ENCODE measurements at regions of chr4 and their contacts with region 1.

Region 1: GRCh38 chr4:71229477-71230270 is 109.1 kb upstream of the SLC4A4 start:
- DNase-seq: peak; percentile 54
- H3K4me3 Mint-ChIP-seq: no peak overlapping the region
- H3K27ac Mint-ChIP-seq: no peak overlapping the region
- H3K4me1 Mint-ChIP-seq: no peaks in the 10 kb centered on the region
- H3K27me3 Mint-ChIP-seq: no peaks in the 10 kb centered on the region
- CTCF ChIP-seq: peak; percentile 70

Region 2: GRCh38 chr4:70601422-70602039 is 628.1 kb before region 1 on chr4:
- CTCF ChIA-PET with region 1: interaction called, 3 read pairs
- POLR2A ChIA-PET with region 1: no interaction called
- intact Hi-C with region 1: loop called (anchors 1 kb)
- DNase-seq: peak; percentile 76
- H3K4me3 Mint-ChIP-seq: no peak overlapping the region
- H3K27ac Mint-ChIP-seq: no peak overlapping the region
- H3K4me1 Mint-ChIP-seq: no peaks in the 10 kb centered on the region
- H3K27me3 Mint-ChIP-seq: no peaks in the 10 kb centered on the region
- CTCF ChIP-seq: peak; percentile 72

Region 3: GRCh38 chr4:71081192-71081591 is 148.5 kb before region 1 on chr4:
- CTCF ChIA-PET with region 1: no interaction called
- POLR2A ChIA-PET with region 1: no interaction called
- intact Hi-C with region 1: no loop called
- DNase-seq: no peak
- H3K4me3 Mint-ChIP-seq: no peak overlapping the region
- H3K27ac Mint-ChIP-seq: no peak overlapping the region
- H3K4me1 Mint-ChIP-seq: no peaks in the 10 kb centered on the region
- H3K27me3 Mint-ChIP-seq: no peaks in the 10 kb centered on the region
- CTCF ChIP-seq: no peak

Region 4: GRCh38 chr4:71095545-71095944 is 134.1 kb before region 1 on chr4:
- CTCF ChIA-PET with region 1: no interaction called
- POLR2A ChIA-PET with region 1: no interaction called
- intact Hi-C with region 1: no loop called
- DNase-seq: no peak
- H3K4me3 Mint-ChIP-seq: no peak overlapping the region
- H3K27ac Mint-ChIP-seq: peak overlapping the region; percentile 0
- H3K4me1 Mint-ChIP-seq: no peaks in the 10 kb centered on the region
- H3K27me3 Mint-ChIP-seq: no peaks in the 10 kb centered on the region
- CTCF ChIP-seq: no peak

Region 5: DNA sequence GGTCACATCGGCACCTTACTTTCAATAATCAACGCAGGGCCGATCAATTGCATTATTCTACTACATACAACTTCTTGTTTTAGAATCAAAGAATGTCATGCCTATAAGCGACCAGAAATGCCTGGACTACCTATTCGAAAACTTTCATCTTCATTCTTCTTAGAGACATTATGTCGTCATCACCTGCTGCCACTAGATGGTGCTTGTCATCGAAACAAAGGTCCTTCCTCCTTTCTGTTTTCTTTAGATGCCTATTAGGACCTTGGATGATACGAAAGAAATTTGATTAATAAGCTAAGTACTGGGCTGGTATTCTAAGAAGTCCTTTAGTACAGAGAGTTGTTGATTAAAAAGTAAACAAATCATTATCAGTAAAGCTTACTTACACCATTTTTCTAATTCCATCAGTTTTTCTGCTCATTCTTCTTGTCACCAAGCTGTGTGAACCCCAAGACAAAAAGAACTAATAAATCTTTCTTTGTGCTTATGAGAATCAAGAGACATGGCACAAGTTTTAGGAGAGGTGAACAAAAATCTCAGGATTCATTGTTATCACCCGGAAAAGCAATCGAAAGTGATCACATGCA is 45.4 kb before region 1 on chr4:
- CTCF ChIA-PET with region 1: interaction called, 35 read pairs
- POLR2A ChIA-PET with region 1: no interaction called
- intact Hi-C with region 1: no loop called
- DNase-seq: peak; percentile 68
- H3K4me3 Mint-ChIP-seq: no peak overlapping the region
- H3K27ac Mint-ChIP-seq: no peak overlapping the region
- H3K4me1 Mint-ChIP-seq: no peaks in the 10 kb centered on the region
- H3K27me3 Mint-ChIP-seq: peaks cover 25% of the 10 kb centered on the region
- CTCF ChIP-seq: peak; percentile 56

Region 6: DNA sequence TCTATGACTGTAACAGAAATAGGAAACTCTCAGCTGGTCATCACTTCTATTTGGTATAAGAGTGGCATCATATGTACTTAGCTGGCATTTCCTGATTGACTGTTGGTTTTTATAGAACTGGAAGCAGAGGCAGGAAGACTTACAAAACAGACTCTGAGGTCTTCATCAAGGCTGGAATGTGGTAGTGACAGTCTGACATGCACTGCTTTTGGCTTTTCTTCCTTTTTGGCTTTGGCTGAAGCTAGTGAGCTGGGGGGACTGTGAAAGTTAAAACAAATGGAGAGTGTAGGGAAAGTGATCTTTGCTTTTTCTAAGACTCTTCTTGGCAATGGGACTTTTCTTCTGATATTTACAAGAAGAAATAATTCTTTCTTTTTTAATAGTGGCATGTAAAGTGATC is 12.0 kb before region 1 on chr4:
- CTCF ChIA-PET with region 1: interaction called, 43 read pairs
- POLR2A ChIA-PET with region 1: no interaction called
- intact Hi-C with region 1: no loop called
- DNase-seq: no peak
- H3K4me3 Mint-ChIP-seq: no peak overlapping the region
- H3K27ac Mint-ChIP-seq: no peak overlapping the region
- H3K4me1 Mint-ChIP-seq: peaks cover 5% of the 10 kb centered on the region
- H3K27me3 Mint-ChIP-seq: no peaks in the 10 kb centered on the region
- CTCF ChIP-seq: no peak

Region 7: GRCh38 chr4:71251261-71251660 is 21.6 kb after region 1 on chr4:
- CTCF ChIA-PET with region 1: interaction called, 12 read pairs
- POLR2A ChIA-PET with region 1: no interaction called
- intact Hi-C with region 1: no loop called
- DNase-seq: no peak
- H3K4me3 Mint-ChIP-seq: no peak overlapping the region
- H3K27ac Mint-ChIP-seq: no peak overlapping the region
- H3K4me1 Mint-ChIP-seq: no peaks in the 10 kb centered on the region
- H3K27me3 Mint-ChIP-seq: no peaks in the 10 kb centered on the region
- CTCF ChIP-seq: no peak

Region 8: DNA sequence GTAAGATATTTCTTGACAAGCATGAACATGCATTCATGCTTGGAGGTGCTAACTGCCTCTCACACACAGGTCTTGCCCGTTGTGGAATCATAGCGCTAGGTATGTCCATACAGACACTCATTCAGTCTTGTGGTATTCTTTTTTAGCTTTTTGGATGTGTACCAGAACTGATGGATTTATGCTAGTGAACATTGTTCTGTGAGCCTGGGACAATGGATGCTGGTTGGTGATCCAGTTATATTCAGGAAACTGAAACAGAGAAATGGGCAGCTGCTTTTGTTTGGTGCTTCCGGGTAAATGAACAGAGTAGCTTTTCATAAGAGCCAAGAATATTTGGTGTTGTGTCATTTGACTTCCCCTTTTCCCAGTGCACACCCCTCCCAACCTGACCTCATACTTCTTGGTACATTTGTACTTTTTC is 30.2 kb after region 1 on chr4:
- CTCF ChIA-PET with region 1: interaction called, 13 read pairs
- POLR2A ChIA-PET with region 1: no interaction called
- intact Hi-C with region 1: no loop called
- DNase-seq: peak; percentile 54
- H3K4me3 Mint-ChIP-seq: peak overlapping the region; percentile 4
- H3K27ac Mint-ChIP-seq: no peak overlapping the region
- H3K4me1 Mint-ChIP-seq: peaks cover 17% of the 10 kb centered on the region
- H3K27me3 Mint-ChIP-seq: no peaks in the 10 kb centered on the region
- CTCF ChIP-seq: no peak

Region 9: DNA sequence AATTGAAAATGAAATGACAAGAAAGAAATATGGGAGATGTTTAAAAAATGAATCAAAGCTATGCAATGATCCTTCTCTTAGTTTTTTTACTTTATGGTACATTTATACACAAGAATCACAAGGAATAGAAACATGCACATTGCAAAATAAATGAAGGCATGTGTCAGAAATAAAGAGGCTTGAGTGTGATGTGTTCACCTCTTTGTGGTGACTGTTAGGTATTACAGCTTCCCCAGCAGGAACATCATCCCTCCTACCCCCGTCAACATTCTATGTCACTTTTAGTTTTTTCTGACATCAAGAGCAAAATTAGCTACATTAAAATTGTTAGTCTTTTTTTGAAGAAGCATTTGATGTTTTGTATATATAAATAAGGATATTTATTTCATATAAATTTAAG is 323.9 kb after region 1 on chr4:
- CTCF ChIA-PET with region 1: interaction called, 38 read pairs
- POLR2A ChIA-PET with region 1: interaction called, 4 read pairs
- intact Hi-C with region 1: loop called (anchors 1 kb)
- DNase-seq: peak; percentile 41
- H3K4me3 Mint-ChIP-seq: no peak overlapping the region
- H3K27ac Mint-ChIP-seq: no peak overlapping the region
- H3K4me1 Mint-ChIP-seq: no peaks in the 10 kb centered on the region
- H3K27me3 Mint-ChIP-seq: no peaks in the 10 kb centered on the region
- CTCF ChIP-seq: peak; percentile 51